CD4-positive, alpha-beta T cell (primary cell): ENCODE measurements at regions of chr16 and their contacts with region 1.

Region 1: GRCh38 chr16:87636072-87636684 is 33.9 kb downstream of the JPH3 start:
- DNase-seq: peak; percentile 66 to 91 (median 79)
- ATAC-seq: peak; percentile 85
- H3K4me3 ChIP-seq: peak overlapping the region; percentile 51
- H3K4me3 Mint-ChIP-seq: peak overlapping the region; percentile 89
- H3K27ac ChIP-seq: peak overlapping the region in 1 of 2 donors; percentile 50
- H3K27ac Mint-ChIP-seq: no peak overlapping the region
- H3K4me1 ChIP-seq: peaks cover 24% of the 10 kb centered on the region
- H3K4me1 Mint-ChIP-seq: peaks cover 11% of the 10 kb centered on the region
- H3K27me3 ChIP-seq: no peaks in the 10 kb centered on the region
- H3K27me3 Mint-ChIP-seq: peaks cover 9% of the 10 kb centered on the region
- CTCF ChIP-seq: peak; percentile 47

Region 2: DNA sequence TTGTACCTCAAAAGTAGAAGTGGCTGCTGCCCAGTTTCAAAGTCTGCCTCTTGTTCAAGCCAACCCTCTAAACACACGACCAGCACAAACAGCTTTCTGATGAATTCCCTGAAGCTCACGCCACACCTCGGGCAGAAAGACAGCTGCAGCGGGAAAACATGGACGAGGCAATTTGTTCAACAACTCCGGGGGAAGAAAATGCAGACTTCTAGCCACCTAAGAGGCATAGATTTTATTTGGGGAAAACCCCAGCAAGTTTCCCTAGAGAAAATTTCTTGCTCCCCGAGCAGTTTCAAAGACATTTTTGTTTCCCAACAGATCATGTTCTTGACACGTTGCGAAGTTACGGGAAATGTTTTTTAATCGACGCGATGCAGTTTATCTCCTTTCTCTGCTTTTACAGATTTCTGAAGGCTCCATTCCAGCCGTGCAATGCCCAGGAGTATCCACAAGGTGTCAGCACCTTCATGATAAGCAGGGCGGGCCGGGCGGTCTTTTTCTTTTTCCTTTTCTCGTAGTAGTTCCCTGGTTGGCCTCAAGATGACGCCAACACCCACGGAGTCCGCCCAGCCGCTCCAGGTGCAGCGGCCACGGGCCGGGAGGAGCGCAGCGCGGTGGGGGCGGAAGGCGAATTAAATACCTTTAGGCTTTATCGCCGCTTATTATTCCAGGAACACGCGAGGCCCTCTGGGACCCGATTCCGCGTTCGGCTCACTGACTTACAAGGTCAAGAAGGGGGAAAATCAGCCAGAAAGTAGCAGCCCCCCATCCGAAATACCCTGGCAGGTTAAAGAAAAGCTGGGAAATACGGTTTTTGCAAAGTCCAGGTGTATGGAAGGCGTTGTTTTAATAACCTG is 1072.5 kb before region 1 on chr16:
- CTCF ChIA-PET with region 1: no interaction called
- POLR2A ChIA-PET with region 1: interaction called, 3 read pairs
- intact Hi-C with region 1: loop called in 1 of 2 experiments (anchors 5 kb)
- DNase-seq: peak; percentile 76 to 92 (median 84)
- ATAC-seq: peak; percentile 99
- H3K4me3 ChIP-seq: peak overlapping the region; percentile 11
- H3K4me3 Mint-ChIP-seq: peak overlapping the region; percentile 30
- H3K27ac ChIP-seq: no peak overlapping the region
- H3K27ac Mint-ChIP-seq: no peak overlapping the region
- H3K4me1 ChIP-seq: peaks cover 31% of the 10 kb centered on the region
- H3K4me1 Mint-ChIP-seq: peaks cover 26% of the 10 kb centered on the region
- H3K27me3 ChIP-seq: peaks cover 39 to 61% of the 10 kb centered on the region in 2 experiments
- H3K27me3 Mint-ChIP-seq: peaks cover 84% of the 10 kb centered on the region
- CTCF ChIP-seq: peak; percentile 100

Region 3: GRCh38 chr16:87297918-87298631 is 338.1 kb before region 1 on chr16:
- CTCF ChIA-PET with region 1: no interaction called
- POLR2A ChIA-PET with region 1: no interaction called
- intact Hi-C with region 1: loop called in 1 of 2 experiments (anchors 10 kb)
- DNase-seq: peak in 9 of 14 experiments; percentile 9 to 58 (median 27)
- ATAC-seq: no peak
- H3K4me3 ChIP-seq: no peak overlapping the region
- H3K4me3 Mint-ChIP-seq: no peak overlapping the region
- H3K27ac ChIP-seq: no peak overlapping the region
- H3K27ac Mint-ChIP-seq: no peak overlapping the region
- H3K4me1 ChIP-seq: peaks cover 3% of the 10 kb centered on the region
- H3K4me1 Mint-ChIP-seq: peaks cover 8% of the 10 kb centered on the region
- H3K27me3 ChIP-seq: no peaks in the 10 kb centered on the region
- H3K27me3 Mint-ChIP-seq: no peaks in the 10 kb centered on the region
- CTCF ChIP-seq: peak; percentile 59

Region 4: GRCh38 chr16:87393680-87394055 is 242.5 kb before region 1 on chr16:
- CTCF ChIA-PET with region 1: interaction called, 3 read pairs
- POLR2A ChIA-PET with region 1: interaction called, 3 read pairs
- intact Hi-C with region 1: loop called in 1 of 2 experiments (anchors 5 kb)
- DNase-seq: no peak
- ATAC-seq: no peak
- H3K4me3 ChIP-seq: peak overlapping the region; percentile 84
- H3K4me3 Mint-ChIP-seq: peak overlapping the region; percentile 95
- H3K27ac ChIP-seq: peak overlapping the region in 1 of 2 donors; percentile 57
- H3K27ac Mint-ChIP-seq: peak overlapping the region; percentile 90
- H3K4me1 ChIP-seq: peaks cover 35% of the 10 kb centered on the region
- H3K4me1 Mint-ChIP-seq: peaks cover 50% of the 10 kb centered on the region
- H3K27me3 ChIP-seq: no peaks in the 10 kb centered on the region
- H3K27me3 Mint-ChIP-seq: no peaks in the 10 kb centered on the region
- CTCF ChIP-seq: no peak

Region 5: DNA sequence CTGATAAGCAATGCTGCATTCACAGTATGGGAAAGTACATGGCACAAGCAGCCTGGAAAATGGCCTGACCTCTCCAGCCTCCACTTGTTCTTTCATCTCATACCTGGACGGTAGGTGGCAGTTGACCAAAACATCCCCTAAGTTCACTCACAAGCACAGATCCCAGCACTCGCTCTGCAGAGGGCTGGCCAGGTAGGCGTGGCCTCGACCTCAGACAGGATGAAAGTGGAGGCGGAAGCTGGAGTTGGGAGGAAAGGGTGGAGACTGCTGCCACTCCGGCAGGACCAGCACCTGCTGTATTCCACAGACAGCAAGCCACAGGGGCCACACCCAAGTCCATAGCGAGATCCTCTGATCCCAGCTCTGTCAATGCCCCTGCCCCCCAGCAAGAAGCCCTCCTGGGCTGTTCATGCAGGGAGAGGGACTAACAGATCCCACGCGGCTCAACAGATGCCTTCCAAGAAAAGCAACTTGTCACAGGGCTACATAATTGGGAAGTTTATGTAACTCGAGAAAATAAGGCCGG is 174.6 kb before region 1 on chr16:
- CTCF ChIA-PET with region 1: interaction called, 5 read pairs
- POLR2A ChIA-PET with region 1: no interaction called
- intact Hi-C with region 1: loop called in 1 of 2 experiments (anchors 5 kb)
- DNase-seq: peak in 5 of 14 experiments; percentile 9 to 60 (median 36)
- ATAC-seq: no peak
- H3K4me3 ChIP-seq: no peak overlapping the region
- H3K4me3 Mint-ChIP-seq: no peak overlapping the region
- H3K27ac ChIP-seq: no peak overlapping the region
- H3K27ac Mint-ChIP-seq: peak overlapping the region; percentile 54
- H3K4me1 ChIP-seq: peaks cover 49% of the 10 kb centered on the region
- H3K4me1 Mint-ChIP-seq: peaks cover 49% of the 10 kb centered on the region
- H3K27me3 ChIP-seq: no peaks in the 10 kb centered on the region
- H3K27me3 Mint-ChIP-seq: no peaks in the 10 kb centered on the region
- CTCF ChIP-seq: no peak